ENCODE measurements at regions of chr18 and their contacts with region 1.

Region 1: GRCh38 chr18:55337908-55338521 is 250.0 kb downstream of the TCF4 start:
- DNase-seq: no peak

Region 2: DNA sequence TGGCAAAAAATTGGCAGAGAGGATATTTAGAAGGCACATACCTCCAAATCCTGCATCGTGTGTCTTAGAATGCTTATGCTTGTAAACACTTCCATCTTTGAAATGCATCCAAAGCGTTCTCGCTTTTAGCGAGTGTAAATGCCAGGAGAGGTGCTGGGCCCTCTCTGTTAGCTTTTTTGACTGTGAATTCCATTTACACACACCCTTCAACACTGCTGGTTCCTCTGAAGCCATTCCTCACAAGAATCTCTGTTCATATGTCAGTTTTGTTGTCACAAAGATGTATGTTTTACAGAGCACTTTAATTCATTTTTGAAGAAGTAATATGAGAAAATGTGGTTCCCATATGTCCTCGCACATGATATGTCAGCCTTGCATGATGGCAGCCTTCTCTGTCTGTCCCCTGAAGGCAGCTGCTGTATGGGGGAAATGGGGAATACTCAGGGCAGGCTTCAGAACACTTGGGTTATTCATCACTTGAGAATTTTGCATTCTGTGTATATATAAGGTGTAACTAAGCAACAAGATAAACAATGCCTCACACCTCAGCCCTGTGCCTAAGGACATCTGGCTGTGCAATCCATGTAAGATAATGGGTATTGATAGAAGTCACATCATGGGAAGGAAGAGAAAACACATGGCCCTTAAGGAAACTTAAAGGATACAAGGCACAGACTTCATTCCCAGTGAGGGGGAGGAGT is 457.5 kb before region 1 on chr18:
- intact Hi-C with region 1: no loop called
- DNase-seq: no peak

Region 3: GRCh38 chr18:55390898-55391297 is 52.9 kb after region 1 on chr18:
- intact Hi-C with region 1: loop called in 1 of 2 experiments (anchors 10 kb)
- DNase-seq: no peak

Region 4: GRCh38 chr18:55577812-55578539 is 240.0 kb after region 1 on chr18:
- intact Hi-C with region 1: no loop called
- DNase-seq: no peak